Activated CD8-positive, alpha-beta T cell treated with anti-CD3 and anti-CD28 coated beads, Interleukin-2, amount 10 ng/mL, durations not matched to agents 7 days and 5 days (primary cell): ENCODE measurements at regions of chrX and their contacts with region 1.

Region 1: DNA sequence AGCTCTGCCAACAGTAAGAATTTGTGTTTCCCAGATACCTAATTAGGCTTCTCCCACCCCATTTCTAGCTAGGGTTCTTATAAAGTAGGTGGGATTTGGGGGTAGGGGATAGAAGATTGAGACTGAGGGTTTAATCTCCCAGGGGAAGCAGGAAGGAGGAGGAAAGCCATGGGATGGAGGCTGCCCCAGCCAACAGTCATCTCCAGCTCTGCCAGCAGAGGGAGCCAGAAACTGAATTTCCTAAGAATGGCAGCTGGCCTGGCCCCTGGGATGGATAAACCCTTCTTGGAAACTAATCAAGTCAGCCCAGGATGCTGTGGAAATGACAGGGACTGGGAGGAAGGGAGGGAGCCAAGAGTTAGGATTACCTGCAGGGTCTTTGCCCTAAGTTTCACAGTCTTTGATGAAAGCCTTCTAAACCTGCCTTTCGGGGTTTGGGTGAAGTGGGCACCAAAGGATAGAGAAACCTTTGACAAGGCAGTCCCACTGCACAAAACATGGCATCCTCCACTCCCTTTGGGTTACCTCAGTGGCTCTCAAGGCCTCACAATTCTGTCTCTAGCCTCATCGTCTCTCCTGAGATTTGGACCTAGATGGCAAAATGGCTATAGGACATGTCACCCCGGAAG is 6.7 kb upstream of the ERCC6L start:
- DNase-seq: peak; percentile 44
- ATAC-seq: peak; percentile 44
- H3K4me3 Mint-ChIP-seq: no peak overlapping the region
- H3K27ac Mint-ChIP-seq: no peak overlapping the region
- H3K4me1 Mint-ChIP-seq: peaks cover 2% of the 10 kb centered on the region
- H3K27me3 Mint-ChIP-seq: no peaks in the 10 kb centered on the region

Region 2: GRCh38 chrX:72018277-72019112 is 227.1 kb before region 1 on chrX:
- CTCF ChIA-PET with region 1: no interaction called
- POLR2A ChIA-PET with region 1: no interaction called
- DNase-seq: peak; percentile 80
- ATAC-seq: peak; percentile 99
- H3K4me3 Mint-ChIP-seq: no peak overlapping the region
- H3K27ac Mint-ChIP-seq: no peak overlapping the region
- H3K4me1 Mint-ChIP-seq: peaks cover 6% of the 10 kb centered on the region
- H3K27me3 Mint-ChIP-seq: peaks cover 48% of the 10 kb centered on the region

Region 3: DNA sequence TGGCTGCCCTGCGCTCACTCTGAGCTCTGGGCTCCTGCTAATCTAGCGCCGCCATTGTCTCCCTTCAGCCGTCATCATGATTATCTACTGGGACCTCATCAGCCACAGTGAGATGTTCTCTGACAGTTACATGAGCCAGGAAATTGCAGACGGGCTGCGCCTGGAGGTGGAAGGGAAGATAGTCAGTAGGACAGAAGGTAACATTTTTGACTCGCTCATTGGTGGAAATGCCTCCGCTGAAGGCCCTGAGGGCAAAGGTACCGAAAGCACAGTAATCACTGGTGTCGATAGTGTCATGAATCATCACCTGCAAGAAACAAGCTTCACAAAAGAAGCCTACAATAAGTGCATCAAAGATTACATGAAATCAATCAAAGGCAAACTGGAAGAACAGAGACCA is 85.8 kb before region 1 on chrX:
- CTCF ChIA-PET with region 1: no interaction called
- POLR2A ChIA-PET with region 1: no interaction called
- DNase-seq: no peak
- ATAC-seq: no peak
- H3K4me3 Mint-ChIP-seq: no peak overlapping the region
- H3K27ac Mint-ChIP-seq: no peak overlapping the region
- H3K4me1 Mint-ChIP-seq: no peaks in the 10 kb centered on the region
- H3K27me3 Mint-ChIP-seq: no peaks in the 10 kb centered on the region

Region 4: DNA sequence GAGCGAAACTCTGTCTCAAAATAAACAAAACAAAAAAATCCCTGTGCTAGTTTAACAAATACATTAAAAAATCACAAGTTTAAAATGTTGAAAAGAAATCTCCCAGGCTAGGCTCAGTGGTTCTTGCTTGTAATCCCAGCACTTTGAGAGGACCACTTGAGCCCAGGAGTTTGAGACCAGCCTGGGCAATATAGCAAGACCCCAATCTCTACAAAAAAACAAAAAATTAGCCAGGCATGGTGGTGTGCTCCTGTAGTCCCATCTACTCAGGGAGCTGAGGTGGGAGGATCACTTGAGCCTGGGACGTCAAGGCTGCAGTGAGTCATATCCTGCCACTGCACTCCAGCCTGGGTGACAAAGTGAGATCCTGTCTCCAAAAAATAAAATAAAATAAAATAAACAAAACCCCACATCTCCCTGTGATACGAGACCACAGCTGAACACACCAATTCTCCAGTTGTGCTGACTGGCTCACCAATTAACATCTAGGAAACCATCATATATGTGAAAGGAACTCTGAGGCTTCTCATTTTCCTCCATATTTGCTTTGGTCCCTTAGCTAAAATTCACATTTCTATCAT is 24.2 kb after region 1 on chrX:
- CTCF ChIA-PET with region 1: interaction called, 10 read pairs
- POLR2A ChIA-PET with region 1: no interaction called
- DNase-seq: peak; percentile 43
- ATAC-seq: peak; percentile 65
- H3K4me3 Mint-ChIP-seq: no peak overlapping the region
- H3K27ac Mint-ChIP-seq: peak overlapping the region; percentile 76
- H3K4me1 Mint-ChIP-seq: peaks cover 42% of the 10 kb centered on the region
- H3K27me3 Mint-ChIP-seq: no peaks in the 10 kb centered on the region

Region 5: GRCh38 chrX:72276478-72276953 is 30.9 kb after region 1 on chrX:
- CTCF ChIA-PET with region 1: interaction called, 18 read pairs
- POLR2A ChIA-PET with region 1: interaction called, 3 read pairs
- DNase-seq: no peak
- ATAC-seq: peak; percentile 3
- H3K4me3 Mint-ChIP-seq: peak overlapping the region; percentile 83
- H3K27ac Mint-ChIP-seq: peak overlapping the region; percentile 85
- H3K4me1 Mint-ChIP-seq: peaks cover 44% of the 10 kb centered on the region
- H3K27me3 Mint-ChIP-seq: peaks cover 12% of the 10 kb centered on the region

Region 6: GRCh38 chrX:72381439-72382201 is 136.0 kb after region 1 on chrX:
- CTCF ChIA-PET with region 1: no interaction called
- POLR2A ChIA-PET with region 1: no interaction called
- DNase-seq: no peak
- ATAC-seq: no peak
- H3K4me3 Mint-ChIP-seq: no peak overlapping the region
- H3K27ac Mint-ChIP-seq: no peak overlapping the region
- H3K4me1 Mint-ChIP-seq: no peaks in the 10 kb centered on the region
- H3K27me3 Mint-ChIP-seq: no peaks in the 10 kb centered on the region